ENCODE measurements at regions of chr11 and their contacts with region 1.

Region 1: GRCh38 chr11:122853971-122854446 is 15.7 kb downstream of the CRTAM start:
- DNase-seq: peak; percentile 96
- ATAC-seq: 0 out of 2 replicates have a peak, but pooled peaks have one; percentile 8
- H3K4me3 ChIP-seq: no peak overlapping the region
- H3K27ac ChIP-seq: peak overlapping the region; percentile 96; the same call in 1 of the 2 replicates
- H3K4me1 ChIP-seq: peaks cover 44% of the 10 kb centered on the region
- H3K27me3 ChIP-seq: no peaks in the 10 kb centered on the region
- CTCF ChIP-seq: peak; percentile 92

Region 2: GRCh38 chr11:122578168-122578825 is 275.7 kb before region 1 on chr11:
- CTCF ChIA-PET with region 1: no interaction called
- POLR2A ChIA-PET with region 1: no interaction called
- intact Hi-C with region 1: loop called (anchors 2 kb)
- DNase-seq: peak; percentile 25
- ATAC-seq: no peak
- H3K4me3 ChIP-seq: no peak overlapping the region
- H3K27ac ChIP-seq: no peak overlapping the region
- H3K4me1 ChIP-seq: peaks cover 12% of the 10 kb centered on the region
- H3K27me3 ChIP-seq: no peaks in the 10 kb centered on the region
- CTCF ChIP-seq: peak; percentile 44; the same call in 1 of the 2 replicates

Region 3: DNA sequence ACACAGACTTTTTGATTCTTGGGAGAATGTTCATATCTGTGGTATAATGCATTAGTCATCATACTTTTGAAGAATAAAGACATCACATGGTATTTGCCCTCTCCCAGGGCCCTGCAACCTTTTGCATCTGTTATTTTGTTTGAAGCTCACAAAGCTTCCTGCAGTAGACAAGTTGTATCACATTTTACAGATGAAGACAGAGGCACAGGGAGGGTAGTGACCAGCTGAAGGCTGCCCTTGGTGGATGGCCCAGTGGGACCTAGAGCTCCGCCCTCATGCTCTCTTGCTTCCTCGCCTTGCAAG is 132.1 kb before region 1 on chr11:
- CTCF ChIA-PET with region 1: no interaction called
- POLR2A ChIA-PET with region 1: interaction called, 12 read pairs
- intact Hi-C with region 1: no loop called
- DNase-seq: peak; percentile 90
- ATAC-seq: peak; percentile 83
- H3K4me3 ChIP-seq: no peak overlapping the region
- H3K27ac ChIP-seq: peak overlapping the region; percentile 49
- H3K4me1 ChIP-seq: peaks cover 45% of the 10 kb centered on the region
- H3K27me3 ChIP-seq: no peaks in the 10 kb centered on the region
- CTCF ChIP-seq: no peak

Region 4: DNA sequence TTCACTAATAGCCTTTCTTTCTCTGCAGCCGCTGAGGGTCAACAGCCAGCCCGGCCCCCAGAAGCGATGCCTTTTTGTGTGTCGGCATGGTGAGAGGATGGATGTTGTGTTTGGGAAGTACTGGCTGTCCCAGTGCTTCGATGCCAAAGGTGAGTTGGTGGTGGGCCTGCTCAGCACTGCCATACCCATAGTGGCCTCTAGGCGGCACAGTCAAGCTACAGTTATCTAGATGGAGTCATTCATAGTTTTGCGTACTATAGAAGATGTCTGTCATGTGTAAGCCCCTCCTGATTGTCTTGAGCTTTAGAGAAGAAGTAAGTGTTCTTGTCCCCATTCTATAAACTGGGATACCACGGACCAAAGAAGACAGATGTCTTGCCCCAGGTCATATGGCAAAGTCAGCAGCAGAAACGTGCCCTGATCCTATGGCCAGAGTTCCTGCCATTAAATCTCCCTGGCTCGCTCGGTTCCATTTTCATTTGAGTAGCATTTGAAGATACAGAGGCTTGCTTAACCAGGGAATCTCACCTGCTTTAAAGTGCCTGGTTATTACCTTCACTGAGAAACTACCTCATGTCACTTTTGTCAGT is 57.8 kb before region 1 on chr11:
- CTCF ChIA-PET with region 1: interaction called, 11 read pairs
- POLR2A ChIA-PET with region 1: interaction called, 3 read pairs
- intact Hi-C with region 1: loop called (anchors 1 kb)
- DNase-seq: peak; percentile 79
- ATAC-seq: peak; percentile 69
- H3K4me3 ChIP-seq: no peak overlapping the region
- H3K27ac ChIP-seq: no peak overlapping the region
- H3K4me1 ChIP-seq: peaks cover 8% of the 10 kb centered on the region; the same call in 1 of the 2 replicates
- H3K27me3 ChIP-seq: no peaks in the 10 kb centered on the region
- CTCF ChIP-seq: peak; percentile 98

Region 5: GRCh38 chr11:122882857-122883645 is 29.0 kb after region 1 on chr11:
- CTCF ChIA-PET with region 1: no interaction called
- POLR2A ChIA-PET with region 1: interaction called, 10 read pairs
- intact Hi-C with region 1: no loop called
- DNase-seq: peak; percentile 83
- ATAC-seq: peak; percentile 81
- H3K4me3 ChIP-seq: peak overlapping the region; percentile 73
- H3K27ac ChIP-seq: peak overlapping the region; percentile 65
- H3K4me1 ChIP-seq: peaks cover 16% of the 10 kb centered on the region
- H3K27me3 ChIP-seq: no peaks in the 10 kb centered on the region
- CTCF ChIP-seq: no peak